B cell (primary cell): ENCODE measurements at regions of chr2 and their contacts with region 1.

Region 1: GRCh38 chr2:98385050-98385699 is 38.9 kb downstream of the CNGA3 start:
- DNase-seq: peak; percentile 78
- ATAC-seq: peak; percentile 88
- H3K4me3 ChIP-seq: no peak overlapping the region
- H3K4me3 Mint-ChIP-seq: no peak overlapping the region
- H3K27ac ChIP-seq: no peak overlapping the region
- H3K27ac Mint-ChIP-seq: no peak overlapping the region
- H3K4me1 ChIP-seq: peaks cover 0 to 2% of the 10 kb centered on the region in 2 donors
- H3K4me1 Mint-ChIP-seq: no peaks in the 10 kb centered on the region
- H3K27me3 ChIP-seq: no peaks in the 10 kb centered on the region
- H3K27me3 Mint-ChIP-seq: peaks cover 14% of the 10 kb centered on the region
- CTCF ChIP-seq: peak; percentile 94

Region 2: GRCh38 chr2:98269274-98269673 is 115.9 kb before region 1 on chr2:
- CTCF ChIA-PET with region 1: interaction called, 7 read pairs
- POLR2A ChIA-PET with region 1: no interaction called
- intact Hi-C with region 1: loop called (anchors 5 kb)
- DNase-seq: peak; percentile 59
- ATAC-seq: peak; percentile 49
- H3K4me3 ChIP-seq: no peak overlapping the region
- H3K4me3 Mint-ChIP-seq: no peak overlapping the region
- H3K27ac ChIP-seq: no peak overlapping the region
- H3K27ac Mint-ChIP-seq: no peak overlapping the region
- H3K4me1 ChIP-seq: no peaks in the 10 kb centered on the region
- H3K4me1 Mint-ChIP-seq: no peaks in the 10 kb centered on the region
- H3K27me3 ChIP-seq: no peaks in the 10 kb centered on the region
- H3K27me3 Mint-ChIP-seq: peaks cover 1% of the 10 kb centered on the region
- CTCF ChIP-seq: peak; percentile 73